ENCODE measurements at regions of chr7 and their contacts with region 1.

Region 1: DNA sequence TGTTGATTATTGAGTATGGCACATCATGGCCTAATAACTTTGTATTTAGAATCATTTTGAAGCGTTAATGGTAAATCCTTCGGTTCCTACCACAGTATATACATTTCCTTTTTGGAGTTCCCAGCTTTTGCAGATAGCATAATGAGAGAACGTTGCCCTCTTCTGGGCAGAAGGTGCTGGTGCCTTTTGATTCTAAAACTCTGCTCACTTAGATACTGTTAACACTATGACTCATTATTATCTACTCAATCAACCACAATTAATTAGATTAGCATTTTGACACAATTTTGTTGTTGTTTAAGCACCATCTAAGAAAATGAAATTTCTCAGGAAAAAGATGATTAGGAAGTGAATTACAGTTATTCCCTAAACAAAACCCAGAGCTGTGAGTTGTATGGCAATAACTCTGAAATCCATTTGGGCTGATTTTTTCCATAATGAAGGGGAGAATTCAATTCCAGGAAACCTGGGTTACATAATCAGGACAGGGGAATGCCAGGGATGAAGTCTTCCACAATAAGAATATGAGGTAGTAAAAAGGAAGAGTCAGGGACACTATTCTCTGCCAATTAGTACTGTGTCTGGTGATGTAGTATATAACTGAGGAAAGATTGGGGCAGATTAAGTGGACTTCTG is 11.5 kb upstream of the DLD start:
- DNase-seq: peak; percentile 86
- H3K4me3 ChIP-seq: no peak overlapping the region
- H3K27ac ChIP-seq: no peak overlapping the region
- H3K4me1 ChIP-seq: peaks cover 2% of the 10 kb centered on the region
- H3K27me3 ChIP-seq: peaks cover 13 to 15% of the 10 kb centered on the region in 2 experiments
- CTCF ChIP-seq: peak; percentile 64 to 65
- POLR2A ChIP-seq: no peak

Region 2: DNA sequence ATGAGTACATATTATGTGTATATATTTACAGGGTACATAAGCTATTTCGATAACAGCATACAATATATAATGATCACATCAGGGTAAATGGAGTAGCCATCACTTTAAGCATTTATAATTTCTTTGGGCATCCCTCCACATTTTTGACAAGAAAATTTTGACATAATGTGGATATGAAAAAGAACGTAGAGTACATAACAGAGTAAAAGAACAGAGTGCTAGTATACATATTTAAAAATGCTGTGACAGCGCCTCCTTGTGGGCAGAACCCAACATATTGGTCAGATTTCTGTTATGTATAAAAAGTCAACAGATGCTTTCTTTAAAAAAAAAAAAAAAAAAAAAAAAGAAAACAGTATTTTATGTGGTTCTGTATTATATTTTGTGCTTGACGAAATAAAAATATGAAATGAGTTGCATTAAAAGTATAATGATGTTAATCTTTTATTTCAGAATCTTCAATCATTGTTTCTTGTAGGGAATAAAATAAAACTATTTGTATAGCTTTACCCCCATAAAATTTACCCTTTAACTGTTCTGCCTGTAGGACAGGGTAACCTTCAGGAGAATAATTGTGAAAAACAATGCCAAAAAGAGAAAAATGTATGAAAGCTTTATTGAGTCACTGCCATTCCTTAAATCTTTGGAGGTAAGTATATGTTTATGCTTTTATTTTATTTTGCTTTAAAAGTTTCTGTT is 729.0 kb before region 1 on chr7:
- CTCF ChIA-PET with region 1: interaction called, 11 read pairs
- POLR2A ChIA-PET with region 1: no interaction called
- dilution Hi-C with region 1: no loop called
- intact Hi-C with region 1: no loop called
- DNase-seq: peak; percentile 89
- H3K4me3 ChIP-seq: no peak overlapping the region
- H3K27ac ChIP-seq: peak overlapping the region; percentile 20
- H3K4me1 ChIP-seq: peaks cover 13% of the 10 kb centered on the region
- H3K27me3 ChIP-seq: no peaks in the 10 kb centered on the region
- CTCF ChIP-seq: peak; percentile 28 to 35
- POLR2A ChIP-seq: no peak

Region 3: GRCh38 chr7:107251963-107252362 is 627.6 kb before region 1 on chr7:
- CTCF ChIA-PET with region 1: no interaction called
- POLR2A ChIA-PET with region 1: no interaction called
- dilution Hi-C with region 1: no loop called
- intact Hi-C with region 1: no loop called
- DNase-seq: no peak
- H3K4me3 ChIP-seq: no peak overlapping the region
- H3K27ac ChIP-seq: no peak overlapping the region
- H3K4me1 ChIP-seq: no peaks in the 10 kb centered on the region
- H3K27me3 ChIP-seq: no peaks in the 10 kb centered on the region
- CTCF ChIP-seq: no peak
- POLR2A ChIP-seq: no peak

Region 4: DNA sequence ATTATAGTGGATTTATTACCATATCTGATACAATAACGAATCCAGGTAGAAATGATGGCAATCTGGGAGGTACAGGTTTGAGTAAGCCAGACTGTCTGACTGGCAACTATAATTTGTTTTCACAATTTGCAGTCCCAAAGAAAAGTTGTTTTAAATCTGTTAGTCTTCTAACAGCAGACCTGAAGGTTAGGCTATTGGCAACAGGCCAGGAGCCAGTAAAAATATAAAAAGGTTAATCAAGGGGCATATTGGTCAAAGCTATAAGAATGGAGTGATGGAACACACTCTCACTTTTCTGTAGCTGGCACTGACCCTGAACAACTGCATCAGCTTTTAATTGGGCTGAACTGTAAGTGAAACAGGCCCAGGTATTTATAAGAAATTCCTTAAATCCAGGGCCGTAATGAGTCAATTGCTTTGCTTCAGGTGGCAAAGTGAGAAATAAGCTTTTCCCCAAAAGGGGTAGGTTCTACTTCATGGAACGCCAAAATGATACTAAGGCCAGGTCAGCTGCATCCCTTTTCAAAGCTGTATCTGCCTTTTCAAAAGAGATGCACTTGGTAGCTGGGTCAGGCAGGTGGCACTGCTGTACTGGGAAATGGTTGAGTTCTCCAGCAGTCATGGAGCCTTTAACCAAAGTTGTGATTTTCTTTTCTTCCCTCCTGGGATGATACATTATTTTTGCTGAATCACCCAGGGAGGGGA is 416.6 kb before region 1 on chr7:
- CTCF ChIA-PET with region 1: interaction called, 72 read pairs
- POLR2A ChIA-PET with region 1: no interaction called
- dilution Hi-C with region 1: no loop called
- intact Hi-C with region 1: loop called (anchors 1 kb)
- DNase-seq: peak; percentile 67
- H3K4me3 ChIP-seq: no peak overlapping the region
- H3K27ac ChIP-seq: no peak overlapping the region
- H3K4me1 ChIP-seq: no peaks in the 10 kb centered on the region
- H3K27me3 ChIP-seq: no peaks in the 10 kb centered on the region
- CTCF ChIP-seq: peak; percentile 65 to 71
- POLR2A ChIP-seq: no peak

Region 5: DNA sequence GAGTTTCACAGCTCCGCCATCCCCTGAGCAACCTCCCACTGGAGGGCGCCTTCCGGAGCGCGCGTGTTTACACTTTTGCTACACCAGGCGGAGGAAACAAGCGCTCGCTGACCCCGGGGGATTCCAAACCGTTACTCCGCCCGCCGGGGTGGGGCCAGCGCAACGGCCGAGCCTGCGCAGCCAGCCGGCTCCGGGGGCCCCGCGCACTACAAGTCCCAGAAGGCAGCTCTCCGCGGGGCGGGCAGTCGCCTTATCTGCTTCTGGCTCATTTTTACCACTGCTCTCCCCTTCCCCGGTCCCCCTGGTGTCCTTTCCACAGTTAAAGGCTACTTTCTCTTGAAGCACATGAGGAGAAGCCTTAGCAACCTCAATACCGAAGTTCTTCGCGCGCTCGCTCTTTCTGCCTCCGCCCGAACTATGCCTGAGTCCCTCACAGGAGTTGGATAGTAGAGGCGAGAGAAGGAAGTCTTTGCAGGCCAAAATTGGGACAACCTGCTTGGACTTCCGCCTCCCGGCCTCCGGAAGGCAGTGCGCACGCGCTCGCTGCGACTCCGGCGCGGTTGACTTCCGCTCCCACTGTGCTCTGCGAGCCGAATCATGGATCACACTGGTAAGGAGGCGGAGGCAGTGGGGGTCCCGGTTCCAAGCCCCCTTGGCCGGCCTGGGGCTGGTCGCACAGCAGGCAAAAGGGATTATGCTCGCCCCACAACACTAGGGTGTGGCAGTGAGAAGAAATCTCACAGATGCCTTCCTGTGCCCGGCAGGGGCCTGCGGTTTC is 135.8 kb before region 1 on chr7 and contains the start of gene CBLL1:
- CTCF ChIA-PET with region 1: interaction called, 201 read pairs
- POLR2A ChIA-PET with region 1: interaction called, 3 read pairs
- dilution Hi-C with region 1: no loop called
- intact Hi-C with region 1: loop called (anchors 1 kb)
- DNase-seq: peak; percentile 98
- H3K4me3 ChIP-seq: peak within 1 kb of the TSS; percentile 45 to 94 (median 79)
- H3K27ac ChIP-seq: peak within 1 kb of the TSS; percentile 96
- H3K4me1 ChIP-seq: peaks cover 38% of the 10 kb centered on the region
- H3K27me3 ChIP-seq: no peaks in the 10 kb centered on the region
- CTCF ChIP-seq: peak; percentile 65 to 76
- POLR2A ChIP-seq: peak; percentile 2
- total RNA-seq, gene CBLL1: 30.6 and 31.1 TPM in 2 replicates

Region 6: GRCh38 chr7:107846324-107846723 is 33.2 kb before region 1 on chr7:
- CTCF ChIA-PET with region 1: interaction called, 11 read pairs
- POLR2A ChIA-PET with region 1: no interaction called
- dilution Hi-C with region 1: no loop called
- intact Hi-C with region 1: no loop called
- DNase-seq: no peak
- H3K4me3 ChIP-seq: no peak overlapping the region
- H3K27ac ChIP-seq: no peak overlapping the region
- H3K4me1 ChIP-seq: no peaks in the 10 kb centered on the region
- H3K27me3 ChIP-seq: peaks cover 2 to 13% of the 10 kb centered on the region in 2 experiments
- CTCF ChIP-seq: no peak
- POLR2A ChIP-seq: no peak

Region 7: DNA sequence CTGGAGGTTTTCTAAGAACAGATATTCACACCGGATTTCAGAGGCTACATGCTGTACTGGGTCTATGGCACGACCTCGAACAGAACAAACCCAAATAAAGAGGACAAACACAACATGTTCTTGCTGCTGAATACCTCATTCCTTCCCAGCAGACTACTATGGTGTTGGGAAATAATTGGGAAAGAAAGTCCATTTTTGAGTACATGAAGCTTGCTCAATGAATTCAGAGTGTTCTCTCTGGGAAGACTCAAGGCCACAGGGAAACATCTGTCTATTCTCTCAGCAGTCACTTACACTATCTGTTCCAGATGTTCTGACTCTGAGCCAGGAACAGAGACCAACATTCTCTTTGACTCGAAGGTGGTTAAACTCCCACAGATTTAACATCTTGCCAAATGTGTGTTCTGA is 92.6 kb after region 1 on chr7:
- CTCF ChIA-PET with region 1: no interaction called
- POLR2A ChIA-PET with region 1: no interaction called
- dilution Hi-C with region 1: no loop called
- intact Hi-C with region 1: no loop called
- DNase-seq: peak; percentile 29
- H3K4me3 ChIP-seq: no peak overlapping the region
- H3K27ac ChIP-seq: peak overlapping the region; percentile 18
- H3K4me1 ChIP-seq: peaks cover 55% of the 10 kb centered on the region
- H3K27me3 ChIP-seq: no peaks in the 10 kb centered on the region
- CTCF ChIP-seq: no peak
- POLR2A ChIP-seq: no peak

Region 8: DNA sequence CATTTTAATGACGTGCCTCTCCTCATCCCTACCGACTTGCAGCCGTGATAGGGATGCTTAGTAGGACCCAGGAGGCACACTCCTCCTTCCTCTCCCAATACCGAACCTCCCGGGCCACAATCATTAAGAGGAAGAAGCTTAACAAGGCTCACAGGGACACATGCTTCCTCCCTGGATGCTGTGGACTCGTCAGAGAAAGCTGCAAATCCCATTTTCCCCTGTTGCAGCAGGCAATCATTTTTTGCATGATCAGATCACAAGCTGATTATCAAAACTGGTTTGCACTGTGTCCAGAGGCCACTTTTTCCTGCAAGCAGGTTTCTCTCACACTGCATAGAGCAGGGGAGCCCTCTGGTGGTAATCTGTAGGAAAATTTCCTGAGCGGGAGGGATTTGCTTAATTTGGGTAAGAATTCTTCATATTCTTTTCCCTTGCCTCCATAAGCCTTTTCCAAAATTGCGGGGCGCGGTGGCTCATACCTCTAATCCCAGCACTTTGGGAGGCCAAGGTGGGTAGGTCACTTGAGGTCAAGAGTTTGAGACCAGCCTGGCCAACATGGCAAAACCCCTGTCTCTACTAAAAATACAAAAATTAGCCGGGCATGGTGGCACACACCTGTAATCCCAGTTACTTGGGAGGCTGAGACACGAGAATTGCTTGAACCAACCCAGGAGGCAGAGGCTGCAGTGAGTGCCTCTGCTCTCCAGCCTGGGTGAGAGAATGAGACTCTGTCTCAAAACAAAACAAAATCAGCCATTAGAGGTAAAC is 266.7 kb after region 1 on chr7:
- CTCF ChIA-PET with region 1: interaction called, 18 read pairs
- POLR2A ChIA-PET with region 1: no interaction called
- dilution Hi-C with region 1: no loop called
- intact Hi-C with region 1: loop called (anchors 1 kb)
- DNase-seq: peak; percentile 80
- H3K4me3 ChIP-seq: no peak overlapping the region
- H3K27ac ChIP-seq: no peak overlapping the region
- H3K4me1 ChIP-seq: no peaks in the 10 kb centered on the region
- H3K27me3 ChIP-seq: no peaks in the 10 kb centered on the region
- CTCF ChIP-seq: peak; percentile 69 to 79
- POLR2A ChIP-seq: no peak

Region 9: DNA sequence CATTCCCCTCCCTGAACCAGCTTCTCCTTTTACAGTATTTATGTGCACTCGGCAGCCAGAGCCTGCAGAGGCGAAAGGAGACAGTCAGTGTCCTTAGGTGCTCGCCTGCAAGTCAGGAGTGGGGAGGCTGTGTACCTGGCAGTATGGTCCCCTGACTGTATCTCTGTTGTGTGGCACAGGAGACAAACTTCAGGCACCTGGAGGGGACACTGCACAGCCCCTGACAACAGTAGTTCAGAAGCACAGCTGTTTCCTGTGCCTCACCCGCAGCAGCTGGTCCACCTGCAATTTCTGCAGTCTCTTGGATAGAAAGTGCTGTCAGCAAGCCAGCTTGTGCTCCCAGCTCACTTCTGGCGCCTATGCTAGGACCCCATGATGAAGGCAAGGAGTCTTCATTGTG is 324.0 kb after region 1 on chr7:
- CTCF ChIA-PET with region 1: no interaction called
- POLR2A ChIA-PET with region 1: no interaction called
- dilution Hi-C with region 1: no loop called
- intact Hi-C with region 1: no loop called
- DNase-seq: no peak
- H3K4me3 ChIP-seq: no peak overlapping the region
- H3K27ac ChIP-seq: no peak overlapping the region
- H3K4me1 ChIP-seq: no peaks in the 10 kb centered on the region
- H3K27me3 ChIP-seq: no peaks in the 10 kb centered on the region
- CTCF ChIP-seq: no peak
- POLR2A ChIP-seq: no peak

Measured in endothelial cell of umbilical vein (primary cell).